ENCODE measurements at regions of chr1 and their contacts with region 1.

Region 1: DNA sequence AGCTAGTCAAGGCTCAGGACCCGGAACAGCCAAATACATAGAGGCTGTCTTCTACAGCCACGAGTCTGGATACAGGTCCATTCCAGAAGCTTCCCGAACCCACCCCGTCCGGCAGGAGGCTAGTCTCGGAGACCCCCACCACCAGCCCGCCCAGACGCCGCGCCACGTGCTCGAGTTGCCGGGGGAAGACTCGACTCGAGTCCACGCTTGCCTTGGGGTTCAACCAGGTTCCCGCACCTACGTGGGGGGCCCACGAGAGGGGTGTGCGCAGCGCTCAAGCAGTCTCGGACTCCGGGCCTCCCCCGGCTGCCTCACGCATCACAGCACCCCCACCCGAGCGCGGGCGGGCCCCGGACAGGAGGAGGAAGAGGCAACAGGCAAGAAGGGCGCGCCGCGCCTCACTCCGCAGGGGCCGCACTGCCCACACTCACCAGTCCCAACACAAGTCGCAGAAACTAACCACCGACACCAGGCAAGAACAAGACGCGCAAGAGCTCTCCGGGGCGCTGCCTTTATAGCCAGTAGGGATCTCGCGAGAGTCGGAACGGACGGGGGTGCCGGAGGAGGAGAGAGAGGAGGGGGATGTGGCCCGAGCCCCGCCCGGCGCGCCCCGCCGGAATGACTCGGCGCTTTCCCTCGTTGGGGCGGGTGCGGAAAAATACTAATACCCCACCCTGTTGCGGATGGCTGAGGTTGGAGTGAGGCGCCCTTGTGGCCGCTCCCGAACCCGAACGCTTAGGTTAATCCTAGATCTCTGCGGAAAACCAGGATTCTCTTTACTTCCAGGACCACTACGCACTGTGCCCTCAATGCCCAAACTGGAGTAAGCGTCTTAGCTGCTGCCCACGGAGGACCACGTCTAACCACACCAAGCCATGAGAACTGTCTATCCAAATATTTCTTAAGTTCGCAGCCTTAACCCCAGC is at the start of gene PRDX1:
- DNase-seq: peak; percentile 97 to 99 (median 98)
- ATAC-seq: peak; percentile 93 to 98 (median 97)
- H3K4me3 ChIP-seq: peak within 1 kb of the TSS; percentile 69 to 99 (median 84)
- H3K27ac ChIP-seq: peak within 1 kb of the TSS; percentile 67 to 98 (median 94)
- H3K4me1 ChIP-seq: peaks cover 0 to 43% (median 16%) of the 10 kb centered on the region in 12 donors
- H3K27me3 ChIP-seq: no peaks in the 10 kb centered on the region
- CTCF ChIP-seq: peak in 3 of 12 donors; percentile 14 to 38 (median 24)
- POLR2A ChIP-seq: peak; percentile 68 to 99
- total RNA-seq, gene PRDX1: 249 to 501 (median 313) TPM

Region 2: DNA sequence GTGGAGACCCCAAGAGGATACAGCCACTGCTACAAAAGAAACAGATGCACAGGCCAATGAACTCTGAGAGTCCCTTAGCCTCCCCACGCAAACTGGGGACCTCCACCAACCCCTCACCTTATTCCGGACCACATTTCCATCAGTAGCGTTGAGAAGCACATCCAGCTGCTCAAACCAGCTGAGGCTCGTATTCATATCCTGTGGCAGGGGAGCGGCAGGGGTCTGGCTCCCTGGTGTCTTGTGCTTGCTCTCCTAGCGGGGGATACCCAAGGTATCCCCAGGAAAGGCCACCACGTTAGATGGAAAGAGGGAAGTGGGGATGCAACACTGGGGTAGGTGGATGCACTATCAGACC is 22.3 kb before region 1 on chr1:
- intact Hi-C with region 1: loop called in 1 of 10 experiments (anchors 1 kb)
- DNase-seq: no peak
- ATAC-seq: peak in 1 of 4 donors; percentile 1
- H3K4me3 ChIP-seq: peak overlapping the region; percentile 24 to 83 (median 68)
- H3K27ac ChIP-seq: peak overlapping the region in 8 of 12 donors; percentile 19 to 76 (median 55)
- H3K4me1 ChIP-seq: peaks cover 0 to 27% (median 14%) of the 10 kb centered on the region in 12 donors
- H3K27me3 ChIP-seq: no peaks in the 10 kb centered on the region
- CTCF ChIP-seq: peak in 1 of 12 donors; percentile 3
- POLR2A ChIP-seq: no peak

Region 3: DNA sequence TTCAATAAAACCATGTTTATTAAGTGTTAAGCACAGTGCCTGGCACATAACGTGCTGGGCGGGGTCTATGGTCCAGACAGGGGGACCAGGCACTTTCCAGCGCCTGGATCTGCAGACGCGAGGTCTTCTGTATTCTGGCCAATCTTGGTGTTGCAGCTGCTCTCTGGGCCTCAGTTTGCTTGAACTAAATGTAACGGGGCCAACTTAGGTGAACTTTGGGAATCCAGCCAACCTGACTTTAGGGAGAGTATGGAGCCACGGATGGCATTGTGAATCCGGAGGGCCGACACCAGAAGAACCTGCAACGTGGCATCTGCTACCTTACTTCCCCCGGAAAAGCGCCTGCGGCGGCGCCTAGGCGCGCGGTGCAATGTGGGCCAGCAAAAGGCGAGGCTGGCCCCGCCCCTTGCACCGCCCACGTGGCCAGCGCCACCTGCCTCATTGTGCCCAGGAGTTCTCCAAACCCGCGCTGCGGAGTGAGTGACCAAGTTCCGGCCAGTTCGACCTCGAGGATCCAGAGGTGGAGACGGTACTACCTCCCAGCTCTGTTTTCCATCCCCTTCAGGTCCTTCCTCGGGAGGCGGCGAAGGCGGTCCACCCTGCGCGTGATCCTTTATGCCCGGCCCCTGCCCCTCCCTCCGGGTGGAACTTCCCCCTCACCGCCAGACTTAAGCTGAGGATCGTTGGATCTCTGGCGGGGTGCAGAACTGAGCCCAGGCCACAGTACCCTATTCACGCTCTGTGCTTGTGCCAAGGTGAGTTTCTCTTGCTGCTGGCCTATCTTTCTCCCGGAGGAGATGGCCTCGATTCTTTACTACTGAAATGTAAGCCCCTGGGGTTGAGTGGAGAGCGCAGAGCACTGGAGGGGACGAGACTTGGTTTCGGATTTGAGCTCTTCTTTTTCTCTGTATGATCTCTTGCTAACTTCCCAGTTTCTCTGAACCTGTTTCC is 29.0 kb after region 1 on chr1 and contains the start of gene AKR1A1:
- intact Hi-C with region 1: loop called in 5 of 10 experiments (anchors 1 to 5 kb)
- DNase-seq: peak; percentile 85 to 93 (median 90)
- ATAC-seq: peak; percentile 96 to 99 (median 98)
- H3K4me3 ChIP-seq: peak within 1 kb of the TSS; percentile 34 to 87 (median 74)
- H3K27ac ChIP-seq: peak within 1 kb of the TSS; percentile 64 to 94 (median 87)
- H3K4me1 ChIP-seq: peaks cover 0 to 32% (median 14%) of the 10 kb centered on the region in 12 donors
- H3K27me3 ChIP-seq: no peaks in the 10 kb centered on the region
- CTCF ChIP-seq: no peak
- POLR2A ChIP-seq: peak in 1 of 2 donors; percentile 48
- total RNA-seq, gene AKR1A1: 28.0 to 148 (median 42.6) TPM

Region 4: GRCh38 chr1:45557422-45557944 is 35.8 kb after region 1 on chr1:
- intact Hi-C with region 1: loop called in 2 of 10 experiments (anchors 5 kb)
- DNase-seq: no peak
- ATAC-seq: no peak
- H3K4me3 ChIP-seq: no peak overlapping the region
- H3K27ac ChIP-seq: peak overlapping the region in 1 of 12 donors; percentile 27
- H3K4me1 ChIP-seq: peaks cover 0 to 16% (median 2%) of the 10 kb centered on the region in 12 donors
- H3K27me3 ChIP-seq: no peaks in the 10 kb centered on the region
- CTCF ChIP-seq: no peak
- POLR2A ChIP-seq: no peak

Region 5: GRCh38 chr1:45569962-45570581 is 48.4 kb after region 1 on chr1:
- intact Hi-C with region 1: loop called in 3 of 10 experiments (anchors 2 to 5 kb)
- DNase-seq: peak; percentile 41 to 68 (median 65)
- ATAC-seq: peak; percentile 15 to 83 (median 80)
- H3K4me3 ChIP-seq: no peak overlapping the region
- H3K27ac ChIP-seq: no peak overlapping the region
- H3K4me1 ChIP-seq: peaks cover 0 to 12% (median 8%) of the 10 kb centered on the region in 12 donors
- H3K27me3 ChIP-seq: no peaks in the 10 kb centered on the region
- CTCF ChIP-seq: peak; percentile 95 to 100 (median 98)
- POLR2A ChIP-seq: no peak